ENCODE measurements at regions of chr7 and their contacts with region 1.

Region 1: DNA sequence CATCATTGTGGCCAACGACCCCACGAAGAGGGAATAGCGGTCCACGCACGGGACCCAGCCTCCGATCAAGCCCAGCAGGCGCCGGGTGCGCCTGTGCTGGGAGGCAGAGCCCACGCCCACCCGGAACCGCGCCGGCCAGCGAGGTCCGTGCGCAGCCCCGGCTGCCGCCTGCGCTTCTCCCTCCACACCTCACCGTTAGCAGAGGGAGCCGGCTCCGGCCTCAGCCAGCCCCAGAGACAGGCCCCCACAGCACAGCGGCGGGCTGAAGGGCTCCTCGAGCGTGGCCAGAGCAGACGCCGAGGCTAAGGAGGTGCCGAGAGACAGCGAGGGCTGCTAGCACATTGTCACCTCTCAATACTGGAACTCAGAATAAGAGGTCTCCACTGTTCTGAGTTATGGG is 3.6 kb downstream of the ITPRID1 start:
- DNase-seq: peak; percentile 68

Region 2: DNA sequence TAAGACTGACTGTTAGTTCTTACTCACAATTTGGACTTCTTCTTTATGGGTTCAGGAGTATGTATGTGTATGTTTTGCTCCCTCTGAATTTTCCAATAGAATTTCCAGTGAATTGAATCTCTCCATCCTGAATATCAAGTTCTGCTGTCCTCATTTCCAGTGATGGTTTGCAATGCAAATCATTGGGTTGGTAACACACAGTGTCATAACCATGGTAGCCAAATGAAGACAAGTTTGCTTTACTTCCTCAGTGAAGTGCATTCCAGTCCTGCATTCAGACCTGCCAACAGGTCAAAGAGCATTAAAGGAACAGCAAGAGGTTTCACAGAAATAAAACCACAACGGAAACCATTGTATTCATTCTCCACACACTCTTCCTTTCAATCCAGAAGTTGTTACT is 11.6 kb after region 1 on chr7:
- intact Hi-C with region 1: no loop called
- DNase-seq: no peak

Region 3: DNA sequence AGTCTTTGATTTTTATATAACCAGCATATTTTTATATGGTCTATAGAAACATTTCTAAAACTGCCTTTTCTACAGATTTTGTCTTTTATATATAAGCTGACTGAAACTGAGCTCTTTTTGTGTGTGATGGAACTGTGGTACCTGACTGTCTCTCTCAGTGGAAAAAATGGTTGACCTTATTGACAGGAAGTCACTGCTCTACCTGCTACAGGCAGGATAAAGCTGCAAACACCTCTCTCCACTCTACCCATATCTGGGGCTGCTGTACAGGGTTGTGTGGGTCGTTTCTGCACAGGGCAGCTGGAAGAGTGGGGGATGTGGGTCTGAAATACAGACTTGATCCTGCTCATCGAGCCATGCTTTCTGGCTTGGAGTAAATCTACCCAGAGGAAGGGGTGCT is 1660.4 kb after region 1 on chr7:
- intact Hi-C with region 1: loop called in 1 of 2 experiments (anchors 10 kb)
- DNase-seq: no peak